Naive thymus-derived CD4-positive, alpha-beta T cell (primary cell): ENCODE measurements at regions of chr1 and their contacts with region 1.

Region 1: GRCh38 chr1:180482425-180483275 is 19.7 kb downstream of the ACBD6 start:
- DNase-seq: peak in 6 of 9 donors; percentile 12 to 44 (median 36)
- ATAC-seq: peak; percentile 63
- H3K4me3 ChIP-seq: no peak overlapping the region
- H3K4me3 Mint-ChIP-seq: peak overlapping the region in 7 of 10 donors; percentile 20 to 63 (median 35)
- H3K27ac ChIP-seq: no peak overlapping the region
- H3K27ac Mint-ChIP-seq: peak overlapping the region in 1 of 9 donors; percentile 6
- H3K4me1 ChIP-seq: peaks cover 0 to 6% of the 10 kb centered on the region in 2 donors
- H3K4me1 Mint-ChIP-seq: peaks cover 7 to 32% (median 17%) of the 10 kb centered on the region in 7 donors
- H3K27me3 ChIP-seq: no peaks in the 10 kb centered on the region
- H3K27me3 Mint-ChIP-seq: no peaks in the 10 kb centered on the region

Region 2: GRCh38 chr1:180080433-180080832 is 402.2 kb before region 1 on chr1:
- CTCF ChIA-PET with region 1: no interaction called
- POLR2A ChIA-PET with region 1: no interaction called
- intact Hi-C with region 1: loop called in 1 of 2 experiments (anchors 10 kb)
- DNase-seq: no peak
- ATAC-seq: no peak
- H3K4me3 ChIP-seq: no peak overlapping the region
- H3K4me3 Mint-ChIP-seq: no peak overlapping the region
- H3K27ac ChIP-seq: no peak overlapping the region
- H3K27ac Mint-ChIP-seq: no peak overlapping the region
- H3K4me1 ChIP-seq: no peaks in the 10 kb centered on the region
- H3K4me1 Mint-ChIP-seq: no peaks in the 10 kb centered on the region
- H3K27me3 ChIP-seq: no peaks in the 10 kb centered on the region
- H3K27me3 Mint-ChIP-seq: no peaks in the 10 kb centered on the region

Region 3: GRCh38 chr1:180234369-180235076 is 248.1 kb before region 1 on chr1:
- CTCF ChIA-PET with region 1: no interaction called
- POLR2A ChIA-PET with region 1: no interaction called
- intact Hi-C with region 1: loop called in 1 of 2 experiments (anchors 5 kb)
- DNase-seq: no peak
- ATAC-seq: no peak
- H3K4me3 ChIP-seq: no peak overlapping the region
- H3K4me3 Mint-ChIP-seq: peak overlapping the region in 8 of 10 donors; percentile 25 to 68 (median 56)
- H3K27ac ChIP-seq: no peak overlapping the region
- H3K27ac Mint-ChIP-seq: peak overlapping the region in 2 of 9 donors; percentile 47 to 83
- H3K4me1 ChIP-seq: peaks cover 19 to 24% of the 10 kb centered on the region in 2 donors
- H3K4me1 Mint-ChIP-seq: peaks cover 17 to 52% (median 38%) of the 10 kb centered on the region in 7 donors
- H3K27me3 ChIP-seq: peaks cover 26 to 49% of the 10 kb centered on the region in 2 donors
- H3K27me3 Mint-ChIP-seq: peaks cover 66 to 89% (median 75%) of the 10 kb centered on the region in 5 donors

Region 4: DNA sequence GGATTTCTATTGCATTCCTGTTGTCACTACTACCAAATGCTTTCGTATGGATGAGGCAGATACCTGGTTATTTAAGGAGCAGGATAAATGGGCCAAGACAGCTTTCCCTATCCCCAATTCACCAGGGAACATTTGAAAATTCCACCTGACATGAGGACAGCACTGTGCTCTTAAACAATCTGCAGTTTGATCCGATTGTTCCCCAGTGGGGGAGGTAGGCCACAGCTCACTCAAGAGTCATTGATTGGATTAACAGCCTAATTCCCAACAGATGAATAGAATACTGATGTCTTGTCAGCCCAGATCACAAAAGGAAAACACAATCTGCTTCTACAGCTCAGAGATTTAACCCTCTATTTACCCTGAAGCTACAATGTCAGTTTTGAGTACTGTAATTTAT is 128.7 kb before region 1 on chr1:
- CTCF ChIA-PET with region 1: no interaction called
- POLR2A ChIA-PET with region 1: no interaction called
- intact Hi-C with region 1: no loop called
- DNase-seq: no peak
- ATAC-seq: no peak
- H3K4me3 ChIP-seq: no peak overlapping the region
- H3K4me3 Mint-ChIP-seq: no peak overlapping the region
- H3K27ac ChIP-seq: no peak overlapping the region
- H3K27ac Mint-ChIP-seq: no peak overlapping the region
- H3K4me1 ChIP-seq: no peaks in the 10 kb centered on the region
- H3K4me1 Mint-ChIP-seq: peaks cover 0 to 17% (median 10%) of the 10 kb centered on the region in 7 donors
- H3K27me3 ChIP-seq: no peaks in the 10 kb centered on the region
- H3K27me3 Mint-ChIP-seq: no peaks in the 10 kb centered on the region

Region 5: DNA sequence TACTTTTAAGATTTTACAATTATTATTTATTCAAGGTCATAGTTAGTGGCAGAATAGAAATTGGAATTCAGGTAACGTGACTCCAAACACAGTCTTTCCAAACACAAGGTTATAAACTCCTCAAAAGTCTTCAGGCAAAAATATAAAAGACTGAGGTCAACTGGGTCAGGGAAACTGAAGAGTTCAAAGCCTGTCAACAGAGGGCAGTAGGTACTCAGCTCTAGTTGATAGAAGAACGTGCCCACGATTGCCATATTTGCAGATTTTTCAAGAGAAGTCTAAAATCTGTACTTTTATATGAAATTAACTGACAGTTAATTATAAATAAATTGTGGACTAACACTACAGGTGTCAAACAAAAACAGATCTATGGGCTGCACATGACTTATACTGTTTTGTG is 117.6 kb before region 1 on chr1:
- CTCF ChIA-PET with region 1: no interaction called
- POLR2A ChIA-PET with region 1: no interaction called
- intact Hi-C with region 1: loop called in 1 of 2 experiments (anchors 10 kb)
- DNase-seq: no peak
- ATAC-seq: no peak
- H3K4me3 ChIP-seq: no peak overlapping the region
- H3K4me3 Mint-ChIP-seq: no peak overlapping the region
- H3K27ac ChIP-seq: no peak overlapping the region
- H3K27ac Mint-ChIP-seq: no peak overlapping the region
- H3K4me1 ChIP-seq: no peaks in the 10 kb centered on the region
- H3K4me1 Mint-ChIP-seq: peaks cover 0 to 33% (median 6%) of the 10 kb centered on the region in 7 donors
- H3K27me3 ChIP-seq: no peaks in the 10 kb centered on the region
- H3K27me3 Mint-ChIP-seq: no peaks in the 10 kb centered on the region